ENCODE measurements at regions of chr1 and their contacts with region 1.

Region 1: DNA sequence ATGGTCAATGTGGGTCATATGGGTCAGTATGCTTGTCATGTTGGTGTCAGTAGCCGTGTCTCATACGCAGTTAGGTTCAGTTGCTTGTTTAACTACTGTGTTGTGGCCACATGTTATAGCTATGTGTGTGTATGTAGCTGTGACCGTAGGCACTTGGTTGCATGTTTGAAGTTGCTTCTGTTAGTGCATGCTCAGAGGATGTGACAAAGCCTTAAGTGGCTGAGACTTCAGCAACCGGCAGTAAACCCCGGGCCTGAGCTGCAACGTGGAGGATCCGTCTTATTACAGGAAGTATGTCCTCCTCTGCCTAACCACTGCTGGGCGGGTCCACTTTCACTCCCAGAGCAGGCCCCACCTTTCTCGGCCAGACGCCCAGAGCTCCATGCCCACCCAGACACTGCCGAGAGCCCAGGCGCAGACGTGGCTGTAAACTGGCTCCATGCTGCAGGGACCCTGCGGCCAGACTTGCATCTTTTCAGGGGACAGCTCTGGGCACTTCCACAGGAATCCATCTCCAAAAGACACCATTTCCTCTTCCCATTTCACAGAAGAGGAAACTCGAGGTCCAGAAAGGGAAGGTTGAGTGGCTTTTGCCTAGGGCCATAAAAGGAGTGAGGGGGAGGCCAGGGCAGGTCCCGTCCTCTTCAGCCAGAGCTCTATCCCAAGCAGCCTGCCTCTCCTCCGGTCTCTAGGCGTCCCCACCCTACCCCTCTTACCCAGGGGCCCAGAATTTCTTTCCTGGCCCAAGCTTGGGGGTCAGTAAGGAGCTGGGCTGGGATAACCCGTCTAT is 2.1 kb downstream of the TCEA3 start:
- DNase-seq: peak; percentile 68
- ATAC-seq: peak; percentile 65
- H3K4me3 ChIP-seq: peak overlapping the region; percentile 19; the same call in 1 of the 2 replicates
- H3K27ac ChIP-seq: peak overlapping the region; percentile 59
- H3K4me1 ChIP-seq: peaks cover 23% of the 10 kb centered on the region
- H3K27me3 ChIP-seq: no peaks in the 10 kb centered on the region
- CTCF ChIP-seq: no peak

Region 2: DNA sequence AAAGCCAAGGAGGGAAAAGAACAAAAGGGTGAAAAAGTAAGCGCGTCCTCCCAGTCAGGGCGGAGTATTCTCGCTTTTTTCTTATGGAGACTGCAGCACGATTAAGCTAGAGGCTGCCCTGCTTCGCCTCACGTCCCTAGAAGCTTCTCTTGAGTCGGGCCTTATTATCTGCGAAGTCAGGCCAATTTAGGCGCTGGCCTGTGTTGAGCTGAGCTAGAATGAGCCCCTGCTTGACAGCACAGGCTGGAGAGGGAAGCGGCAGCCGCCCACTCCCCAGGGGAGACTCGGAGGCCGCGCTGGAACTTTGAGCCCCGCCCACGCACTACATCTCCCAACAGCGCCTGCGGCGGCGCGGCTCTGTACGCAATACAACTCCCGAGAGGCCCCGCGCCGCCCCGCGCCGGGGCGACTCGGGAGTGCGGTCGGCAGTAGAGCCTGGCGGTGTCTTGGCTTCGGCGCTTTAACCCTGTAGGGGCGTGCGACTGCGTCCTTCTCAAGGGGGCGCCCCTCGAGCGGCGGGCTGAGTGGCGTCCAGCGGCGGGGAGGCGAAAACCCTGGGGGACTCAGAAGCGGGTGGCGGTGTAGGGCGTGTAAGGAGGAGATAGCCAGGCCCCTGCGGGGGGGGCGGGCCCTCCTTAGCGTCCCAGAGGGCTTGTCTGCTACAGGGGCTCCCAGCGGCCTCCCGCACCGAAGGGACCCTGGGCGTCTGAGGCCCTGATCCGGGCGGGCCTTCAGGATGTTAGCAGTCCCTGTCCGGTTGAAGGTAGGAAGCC is 53.7 kb before region 1 on chr1:
- CTCF ChIA-PET with region 1: no interaction called
- POLR2A ChIA-PET with region 1: no interaction called
- intact Hi-C with region 1: no loop called
- DNase-seq: peak; percentile 90
- ATAC-seq: peak; percentile 76
- H3K4me3 ChIP-seq: peak overlapping the region; percentile 93
- H3K27ac ChIP-seq: peak overlapping the region; percentile 74
- H3K4me1 ChIP-seq: peaks cover 26% of the 10 kb centered on the region
- H3K27me3 ChIP-seq: no peaks in the 10 kb centered on the region
- CTCF ChIP-seq: 0 out of 2 replicates have a peak, but pooled peaks have one; percentile 12

Region 3: GRCh38 chr1:23484253-23485001 is 62.0 kb after region 1 on chr1:
- CTCF ChIA-PET with region 1: interaction called, 3 read pairs
- POLR2A ChIA-PET with region 1: no interaction called
- intact Hi-C with region 1: loop called (anchors 2 kb)
- DNase-seq: peak; percentile 82
- ATAC-seq: peak; percentile 91
- H3K4me3 ChIP-seq: peak overlapping the region; percentile 76
- H3K27ac ChIP-seq: no peak overlapping the region
- H3K4me1 ChIP-seq: peaks cover 12% of the 10 kb centered on the region
- H3K27me3 ChIP-seq: no peaks in the 10 kb centered on the region
- CTCF ChIP-seq: no peak